Activated CD4-positive, alpha-beta T cell treated with anti-CD3 and anti-CD28 coated beads for 36 hours (primary cell): ENCODE measurements at regions of chr11 and their contacts with region 1.

Region 1: GRCh38 chr11:85854557-85855340 is 434 bp upstream of the CCDC83 start:
- DNase-seq: peak; percentile 94
- ATAC-seq: peak; percentile 93
- H3K4me3 Mint-ChIP-seq: peak overlapping the region; percentile 77
- H3K27ac Mint-ChIP-seq: peak overlapping the region; percentile 94
- H3K4me1 Mint-ChIP-seq: peaks cover 2% of the 10 kb centered on the region
- H3K27me3 Mint-ChIP-seq: no peaks in the 10 kb centered on the region

Region 2: GRCh38 chr11:85595285-85595884 is 259.4 kb before region 1 on chr11:
- CTCF ChIA-PET with region 1: interaction called, 3 read pairs
- POLR2A ChIA-PET with region 1: no interaction called
- intact Hi-C with region 1: loop called (anchors 1 to 2 kb)
- DNase-seq: no peak
- ATAC-seq: peak; percentile 64
- H3K4me3 Mint-ChIP-seq: no peak overlapping the region
- H3K27ac Mint-ChIP-seq: no peak overlapping the region
- H3K4me1 Mint-ChIP-seq: no peaks in the 10 kb centered on the region
- H3K27me3 Mint-ChIP-seq: peaks cover 2% of the 10 kb centered on the region

Region 3: GRCh38 chr11:85694386-85694980 is 160.3 kb before region 1 on chr11:
- CTCF ChIA-PET with region 1: interaction called, 3 read pairs
- POLR2A ChIA-PET with region 1: no interaction called
- intact Hi-C with region 1: loop called (anchors 1 to 2 kb)
- DNase-seq: peak; percentile 16
- ATAC-seq: no peak
- H3K4me3 Mint-ChIP-seq: no peak overlapping the region
- H3K27ac Mint-ChIP-seq: no peak overlapping the region
- H3K4me1 Mint-ChIP-seq: peaks cover 19% of the 10 kb centered on the region
- H3K27me3 Mint-ChIP-seq: no peaks in the 10 kb centered on the region

Region 4: DNA sequence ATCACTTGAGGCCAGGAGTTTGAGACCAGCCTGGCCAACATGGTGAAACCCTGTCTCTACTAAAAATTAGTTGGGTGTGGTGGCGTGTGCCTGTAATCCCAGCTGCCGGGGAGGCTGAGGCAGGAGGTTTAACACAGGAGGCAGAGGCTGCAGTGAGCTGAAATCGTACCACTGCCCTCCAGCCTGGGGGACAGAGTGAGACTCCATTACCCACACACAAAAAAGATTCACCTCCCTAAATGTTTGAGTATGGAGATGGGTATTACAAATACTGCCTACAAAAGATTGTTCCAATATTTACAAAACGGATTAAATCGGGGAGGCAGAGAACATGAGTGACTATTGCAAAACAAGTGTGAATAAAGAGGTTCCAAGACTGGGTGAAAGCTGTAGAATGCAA is 115.8 kb after region 1 on chr11:
- CTCF ChIA-PET with region 1: interaction called, 10 read pairs
- POLR2A ChIA-PET with region 1: no interaction called
- intact Hi-C with region 1: no loop called
- DNase-seq: no peak
- ATAC-seq: no peak
- H3K4me3 Mint-ChIP-seq: no peak overlapping the region
- H3K27ac Mint-ChIP-seq: no peak overlapping the region
- H3K4me1 Mint-ChIP-seq: peaks cover 8% of the 10 kb centered on the region
- H3K27me3 Mint-ChIP-seq: no peaks in the 10 kb centered on the region

Region 5: GRCh38 chr11:86244522-86245368 is 390.0 kb after region 1 on chr11 and contains the start of gene EED:
- CTCF ChIA-PET with region 1: no interaction called
- POLR2A ChIA-PET with region 1: no interaction called
- intact Hi-C with region 1: loop called in 1 of 2 experiments (anchors 1 kb)
- DNase-seq: peak; percentile 97
- ATAC-seq: peak; percentile 79
- H3K4me3 Mint-ChIP-seq: no peak within 1 kb of the TSS
- H3K27ac Mint-ChIP-seq: no peak within 1 kb of the TSS
- H3K4me1 Mint-ChIP-seq: peaks cover 42% of the 10 kb centered on the region
- H3K27me3 Mint-ChIP-seq: peaks cover 3% of the 10 kb centered on the region
- total RNA-seq, gene EED: 90.3 to 127 TPM

Region 6: GRCh38 chr11:86456052-86456939 is 601.5 kb after region 1 on chr11:
- CTCF ChIA-PET with region 1: interaction called, 6 read pairs
- POLR2A ChIA-PET with region 1: no interaction called
- intact Hi-C with region 1: loop called in 1 of 2 experiments (anchors 1 kb)
- DNase-seq: peak; percentile 93
- ATAC-seq: peak; percentile 92
- H3K4me3 Mint-ChIP-seq: no peak overlapping the region
- H3K27ac Mint-ChIP-seq: no peak overlapping the region
- H3K4me1 Mint-ChIP-seq: peaks cover 21% of the 10 kb centered on the region
- H3K27me3 Mint-ChIP-seq: no peaks in the 10 kb centered on the region